ENCODE measurements at regions of chr7 and their contacts with region 1.

Region 1: DNA sequence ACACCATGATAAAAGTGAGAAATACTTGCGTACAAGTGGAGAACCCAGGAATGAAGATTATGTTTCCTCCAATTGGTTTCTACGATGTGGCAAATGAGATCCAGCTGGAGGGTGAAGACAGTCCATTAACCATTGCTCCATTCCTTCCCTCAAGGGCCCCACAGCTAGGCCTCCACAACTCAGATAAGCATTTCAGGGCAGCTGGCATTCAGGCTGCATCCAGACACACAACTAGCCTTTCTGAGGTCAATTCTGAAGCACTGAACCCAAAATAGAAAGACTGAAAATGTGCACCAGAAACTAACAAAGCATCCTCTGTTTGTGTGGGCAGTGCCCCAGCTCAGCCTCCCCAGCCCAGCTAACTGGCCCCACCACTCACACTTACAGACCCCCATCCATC is 94.8 kb downstream of the GSAP start:
- DNase-seq: no peak
- H3K4me3 ChIP-seq: no peak overlapping the region
- H3K4me3 Mint-ChIP-seq: no peak overlapping the region
- H3K27ac ChIP-seq: no peak overlapping the region
- H3K27ac Mint-ChIP-seq: no peak overlapping the region
- H3K4me1 ChIP-seq: no peaks in the 10 kb centered on the region
- H3K4me1 Mint-ChIP-seq: peaks cover 0 to 1% (median 0%) of the 10 kb centered on the region in 4 donors
- H3K27me3 ChIP-seq: no peaks in the 10 kb centered on the region
- H3K27me3 Mint-ChIP-seq: no peaks in the 10 kb centered on the region

Region 2: GRCh38 chr7:77331938-77332695 is 10.8 kb after region 1 on chr7:
- CTCF ChIA-PET with region 1: interaction called, 11 read pairs
- POLR2A ChIA-PET with region 1: interaction called, 3 read pairs
- intact Hi-C with region 1: no loop called
- DNase-seq: peak in 4 of 5 donors; percentile 51 to 57 (median 54)
- H3K4me3 ChIP-seq: no peak overlapping the region
- H3K4me3 Mint-ChIP-seq: no peak overlapping the region
- H3K27ac ChIP-seq: no peak overlapping the region
- H3K27ac Mint-ChIP-seq: no peak overlapping the region
- H3K4me1 ChIP-seq: peaks cover 38% of the 10 kb centered on the region
- H3K4me1 Mint-ChIP-seq: peaks cover 31 to 56% (median 39%) of the 10 kb centered on the region in 4 donors
- H3K27me3 ChIP-seq: no peaks in the 10 kb centered on the region
- H3K27me3 Mint-ChIP-seq: no peaks in the 10 kb centered on the region

Measured in CD4-positive, alpha-beta memory T cell (primary cell).